ENCODE measurements at regions of chr13 and their contacts with region 1.

Region 1: GRCh38 chr13:47774671-47774994 is 226.4 kb downstream of the SUCLA2 start:
- DNase-seq: no peak
- ATAC-seq: no peak
- H3K4me3 ChIP-seq: no peak overlapping the region
- H3K27ac ChIP-seq: no peak overlapping the region
- H3K4me1 ChIP-seq: no peaks in the 10 kb centered on the region
- H3K27me3 ChIP-seq: no peaks in the 10 kb centered on the region
- CTCF ChIP-seq: no peak

Region 2: GRCh38 chr13:46759846-46760245 is 1014.8 kb before region 1 on chr13:
- CTCF ChIA-PET with region 1: no interaction called
- POLR2A ChIA-PET with region 1: no interaction called
- intact Hi-C with region 1: loop called (anchors 10 kb)
- DNase-seq: peak; percentile 33
- ATAC-seq: peak; percentile 52
- H3K4me3 ChIP-seq: no peak overlapping the region
- H3K27ac ChIP-seq: peak overlapping the region; percentile 16; the same call in 1 of the 2 replicates
- H3K4me1 ChIP-seq: peaks cover 36% of the 10 kb centered on the region
- H3K27me3 ChIP-seq: no peaks in the 10 kb centered on the region
- CTCF ChIP-seq: no peak

Region 3: DNA sequence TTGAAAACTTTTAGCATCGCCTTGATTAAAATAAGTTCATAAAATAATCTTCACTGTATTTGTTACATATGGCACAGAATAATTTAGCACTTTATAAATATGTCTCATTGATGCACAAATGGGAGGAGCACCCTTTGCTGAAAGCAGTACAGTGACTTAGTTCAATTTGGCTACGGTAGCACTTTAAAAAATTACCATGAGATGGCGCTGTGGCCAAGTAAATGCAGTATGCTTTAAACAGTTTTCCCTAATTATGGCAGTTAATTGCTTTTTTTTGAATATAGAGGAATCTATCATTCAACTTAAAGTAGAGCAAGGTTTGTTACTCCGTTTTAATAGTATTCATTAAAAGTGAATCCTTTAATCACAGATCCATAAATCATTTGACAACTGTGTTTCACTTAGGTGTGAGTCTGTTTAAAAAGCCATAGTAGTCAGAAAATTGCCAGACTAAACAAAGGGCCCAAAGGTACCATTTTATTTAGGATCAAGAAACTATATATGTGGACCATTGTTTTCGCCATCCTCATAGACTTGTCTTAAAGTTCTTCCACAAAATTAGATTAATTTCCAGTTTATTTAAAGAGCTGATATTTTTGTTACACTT is 942.9 kb before region 1 on chr13:
- CTCF ChIA-PET with region 1: no interaction called
- POLR2A ChIA-PET with region 1: no interaction called
- intact Hi-C with region 1: loop called (anchors 1 kb)
- DNase-seq: peak; percentile 71
- ATAC-seq: peak; percentile 54; the same call in 1 of the 2 replicates
- H3K4me3 ChIP-seq: no peak overlapping the region
- H3K27ac ChIP-seq: no peak overlapping the region
- H3K4me1 ChIP-seq: no peaks in the 10 kb centered on the region
- H3K27me3 ChIP-seq: no peaks in the 10 kb centered on the region
- CTCF ChIP-seq: peak; percentile 87

Region 4: GRCh38 chr13:46893798-46894560 is 880.7 kb before region 1 on chr13:
- CTCF ChIA-PET with region 1: interaction called, 5 read pairs
- POLR2A ChIA-PET with region 1: no interaction called
- intact Hi-C with region 1: loop called (anchors 1 kb)
- DNase-seq: peak; percentile 56
- ATAC-seq: peak; percentile 76
- H3K4me3 ChIP-seq: peak overlapping the region; percentile 83
- H3K27ac ChIP-seq: no peak overlapping the region
- H3K4me1 ChIP-seq: peaks cover 20% of the 10 kb centered on the region
- H3K27me3 ChIP-seq: no peaks in the 10 kb centered on the region
- CTCF ChIP-seq: peak; percentile 89

Region 5: GRCh38 chr13:47588676-47589075 is 186.0 kb before region 1 on chr13:
- CTCF ChIA-PET with region 1: no interaction called
- POLR2A ChIA-PET with region 1: no interaction called
- intact Hi-C with region 1: loop called (anchors 5 kb)
- DNase-seq: no peak
- ATAC-seq: no peak
- H3K4me3 ChIP-seq: no peak overlapping the region
- H3K27ac ChIP-seq: no peak overlapping the region
- H3K4me1 ChIP-seq: no peaks in the 10 kb centered on the region
- H3K27me3 ChIP-seq: no peaks in the 10 kb centered on the region
- CTCF ChIP-seq: peak; percentile 44; the same call in 1 of the 2 replicates

Region 6: DNA sequence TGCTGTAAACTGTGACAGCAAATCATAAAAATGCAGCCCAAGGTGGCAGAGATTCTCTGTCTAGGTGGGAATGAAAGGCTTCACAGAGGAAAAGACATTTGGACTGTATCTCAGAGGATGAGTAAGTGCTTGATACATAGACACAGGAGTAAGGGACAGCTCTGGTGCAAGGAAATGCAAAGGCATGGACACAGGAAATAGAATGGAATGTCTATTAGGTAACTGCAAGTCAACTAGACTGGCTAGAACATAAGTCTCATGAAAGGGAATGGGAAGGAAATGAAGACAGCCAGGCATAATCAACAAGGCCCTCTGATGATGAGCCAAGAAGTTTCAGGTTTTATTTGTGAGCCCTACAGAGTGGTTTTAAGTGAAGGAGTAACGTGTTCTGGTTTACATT is 95.2 kb before region 1 on chr13:
- CTCF ChIA-PET with region 1: no interaction called
- POLR2A ChIA-PET with region 1: no interaction called
- intact Hi-C with region 1: loop called (anchors 5 kb)
- DNase-seq: peak; percentile 52
- ATAC-seq: peak; percentile 83
- H3K4me3 ChIP-seq: no peak overlapping the region
- H3K27ac ChIP-seq: no peak overlapping the region
- H3K4me1 ChIP-seq: peaks cover 28% of the 10 kb centered on the region
- H3K27me3 ChIP-seq: no peaks in the 10 kb centered on the region
- CTCF ChIP-seq: no peak

Measured in PC-3 (cell line).